Panc1 (cell line): ENCODE measurements at regions of chr17 and their contacts with region 1.

Region 1: DNA sequence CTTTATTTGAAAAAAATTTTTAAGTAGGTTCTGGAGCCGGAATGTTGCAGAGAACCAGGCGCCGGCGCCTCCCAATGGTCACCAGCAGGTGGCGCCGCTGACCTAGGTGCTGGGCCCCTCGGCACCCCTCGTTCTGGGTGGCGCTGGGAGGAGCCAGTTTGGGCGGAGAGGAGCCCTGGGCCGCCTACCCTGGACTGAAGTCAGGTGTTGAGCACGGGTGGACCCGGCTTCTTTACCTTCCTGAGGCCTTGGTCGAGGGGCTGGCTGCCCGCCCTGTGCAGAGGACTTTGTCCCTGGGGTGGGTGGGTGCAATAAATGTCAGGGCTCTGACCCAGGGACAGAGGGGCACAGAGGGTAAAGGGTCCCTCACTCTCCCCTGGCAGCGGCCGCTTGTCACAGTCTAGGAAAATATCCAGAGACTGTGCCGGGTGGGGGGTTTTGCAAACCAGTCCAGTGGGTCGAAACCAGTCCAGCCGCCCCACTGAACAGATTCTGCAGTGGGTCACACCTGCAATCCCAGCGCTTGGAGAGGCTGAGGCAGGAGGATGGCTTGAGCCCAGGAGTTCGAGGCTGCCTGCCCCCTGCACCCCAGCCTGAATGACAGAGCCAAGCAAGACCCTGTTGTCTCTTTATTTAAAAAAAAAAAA is 30.1 kb upstream of the TNFRSF13B start:
- DNase-seq: no peak
- ATAC-seq: peak; percentile 93
- H3K4me3 ChIP-seq: no peak overlapping the region
- H3K27ac ChIP-seq: no peak overlapping the region
- H3K4me1 ChIP-seq: no peaks in the 10 kb centered on the region
- H3K27me3 ChIP-seq: no peaks in the 10 kb centered on the region
- CTCF ChIP-seq: peak; percentile 98

Region 2: DNA sequence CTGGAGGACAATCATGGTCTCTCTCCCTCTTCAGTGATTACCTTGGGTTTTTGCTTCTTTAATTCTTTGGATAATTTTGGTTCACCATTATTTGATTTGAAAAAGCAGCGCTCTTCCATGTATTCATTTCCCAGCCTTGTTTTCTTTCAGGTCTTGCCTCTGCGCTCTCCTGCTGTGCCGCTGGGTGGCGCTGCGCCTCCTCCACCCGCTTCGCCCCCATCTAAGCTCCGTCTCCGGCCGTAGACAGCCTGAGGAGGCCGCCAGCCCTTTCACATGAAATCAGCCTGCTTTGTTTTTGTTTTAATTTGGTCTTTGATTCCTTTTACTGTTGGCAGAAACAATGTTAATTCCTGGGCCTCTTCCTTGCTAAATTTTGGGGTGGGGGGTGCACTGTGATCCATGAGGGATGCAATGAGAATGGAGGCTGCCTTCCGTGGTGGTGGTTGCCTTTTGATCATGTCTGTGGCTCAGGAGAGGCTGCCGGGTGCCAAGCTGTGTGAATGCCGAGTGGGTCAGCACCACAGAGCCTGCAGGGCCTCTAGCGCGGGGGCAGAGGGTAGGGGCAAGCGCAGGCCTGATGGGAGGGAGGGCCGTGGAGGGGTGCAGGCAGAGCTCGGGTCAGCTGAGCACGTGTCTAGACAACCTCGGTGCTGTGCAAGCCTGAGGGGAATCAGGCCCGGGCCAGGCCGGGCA is 140.0 kb after region 1 on chr17:
- CTCF ChIA-PET with region 1: no interaction called
- POLR2A ChIA-PET with region 1: no interaction called
- in situ Hi-C with region 1: no loop called
- intact Hi-C with region 1: loop called (anchors 10 kb)
- DNase-seq: no peak
- ATAC-seq: no peak; the same call in 1 of the 2 replicates
- H3K4me3 ChIP-seq: no peak overlapping the region
- H3K27ac ChIP-seq: no peak overlapping the region
- H3K4me1 ChIP-seq: no peaks in the 10 kb centered on the region
- H3K27me3 ChIP-seq: no peaks in the 10 kb centered on the region
- CTCF ChIP-seq: peak; percentile 93